GM10248 (cell line): ENCODE measurements at regions of chr11 and their contacts with region 1.

Region 1: GRCh38 chr11:88281317-88281712 is 56.2 kb downstream of the CTSC start:
- DNase-seq: no peak
- CTCF ChIP-seq: no peak

Region 2: DNA sequence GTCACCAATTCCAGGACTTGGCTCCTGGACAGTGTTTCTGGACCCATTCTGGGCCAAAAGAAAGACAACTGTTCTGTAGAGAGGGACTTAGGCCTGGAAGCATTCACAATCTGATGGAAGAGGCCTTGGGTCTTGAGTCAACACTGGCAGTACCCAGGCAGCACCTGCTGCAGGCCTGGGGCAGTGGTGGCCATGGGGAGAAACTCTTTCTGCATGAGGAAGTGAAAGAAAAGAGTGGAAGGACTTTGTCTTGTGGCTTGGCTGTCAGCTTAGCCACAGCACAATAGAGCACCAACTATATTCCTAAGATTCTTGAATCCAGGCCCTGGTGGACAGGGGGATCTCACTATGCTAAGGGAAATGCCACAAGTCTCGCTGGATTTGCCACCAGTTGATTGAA is 14.4 kb before region 1 on chr11:
- CTCF ChIA-PET with region 1: interaction called, 11 read pairs
- POLR2A ChIA-PET with region 1: no interaction called
- DNase-seq: no peak
- CTCF ChIP-seq: peak; percentile 8

Region 3: DNA sequence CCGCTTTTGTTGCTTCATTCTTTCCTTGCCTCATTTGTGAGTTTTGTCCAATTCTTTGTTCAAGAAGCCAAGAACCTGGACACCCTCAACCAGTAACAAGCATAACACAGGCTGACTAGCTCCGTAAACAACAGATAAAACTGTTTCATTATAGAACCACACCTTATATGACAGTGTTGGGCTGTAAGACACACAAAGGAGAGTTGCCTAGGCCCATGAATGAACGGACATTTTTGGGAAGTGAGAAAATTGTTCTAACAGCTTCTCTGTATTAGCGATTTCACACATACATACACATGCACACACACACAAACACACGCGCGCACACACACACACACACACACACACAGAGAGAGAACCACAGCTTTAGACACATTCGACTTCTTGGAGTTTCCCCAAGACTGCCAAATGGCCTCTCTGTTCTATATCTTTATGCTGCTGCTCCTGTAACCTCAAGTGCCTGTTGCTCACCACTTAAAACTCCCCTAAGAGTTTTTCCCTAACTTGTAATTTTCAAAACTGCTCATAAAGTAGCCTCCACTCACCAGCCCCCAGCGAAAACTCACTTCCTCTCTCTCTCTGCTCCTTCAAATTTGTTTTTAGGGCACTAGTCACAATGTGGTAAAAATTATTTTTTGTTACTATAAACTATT is 20.3 kb after region 1 on chr11:
- CTCF ChIA-PET with region 1: interaction called, 19 read pairs
- POLR2A ChIA-PET with region 1: no interaction called
- DNase-seq: peak; percentile 35
- CTCF ChIP-seq: no peak

Region 4: DNA sequence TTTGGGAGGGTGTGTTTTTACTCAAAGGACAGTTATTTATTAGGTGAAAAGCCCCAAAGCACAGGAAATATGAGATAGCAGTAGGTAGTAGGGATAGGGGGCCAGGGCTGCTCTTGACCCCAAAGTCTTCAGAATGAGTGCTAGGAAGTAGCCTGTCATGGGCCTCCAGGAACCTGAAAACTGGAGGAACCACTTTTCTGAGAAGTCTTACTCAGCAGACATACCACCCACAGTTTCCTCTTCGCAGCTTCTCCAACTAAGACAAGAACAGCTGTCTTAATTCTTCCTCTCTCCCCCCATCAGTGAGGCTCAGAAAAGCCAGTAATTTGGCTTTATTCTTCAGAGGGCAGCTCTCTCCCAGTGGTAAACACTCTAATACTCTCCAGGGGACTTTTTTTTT is 140.2 kb after region 1 on chr11:
- CTCF ChIA-PET with region 1: no interaction called
- POLR2A ChIA-PET with region 1: no interaction called
- DNase-seq: peak; percentile 44
- CTCF ChIP-seq: no peak